GM13976 (cell line): ENCODE measurements at regions of chr3 and their contacts with region 1.

Region 1: GRCh38 chr3:102229062-102229655 is 205.7 kb upstream of the ZPLD1 start:
- DNase-seq: no peak
- CTCF ChIP-seq: peak; percentile 84

Region 2: DNA sequence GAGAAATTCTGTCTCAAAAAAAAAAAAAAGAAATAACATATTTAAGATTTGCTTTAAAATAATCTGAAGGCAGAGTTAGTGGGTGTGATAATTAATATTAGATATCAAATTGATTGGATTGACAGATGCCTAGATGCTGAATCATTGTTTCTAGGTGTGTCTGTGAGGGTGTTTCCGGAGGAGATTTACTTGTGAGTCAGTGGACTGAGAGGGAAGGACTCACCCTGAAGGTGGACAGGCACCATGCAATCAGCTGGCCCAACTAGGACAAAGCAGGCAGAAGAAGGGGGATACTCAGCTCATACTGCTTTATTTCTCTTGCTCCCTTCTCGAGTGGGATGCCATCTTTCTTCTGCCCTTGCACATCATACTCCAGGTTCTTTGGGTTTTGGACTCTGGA is 526.0 kb before region 1 on chr3:
- in situ Hi-C with region 1: loop called (anchors 10 kb)
- DNase-seq: no peak
- CTCF ChIP-seq: no peak

Region 3: GRCh38 chr3:102006812-102007485 is 222.2 kb before region 1 on chr3:
- in situ Hi-C with region 1: no loop called
- DNase-seq: no peak
- CTCF ChIP-seq: no peak

Region 4: DNA sequence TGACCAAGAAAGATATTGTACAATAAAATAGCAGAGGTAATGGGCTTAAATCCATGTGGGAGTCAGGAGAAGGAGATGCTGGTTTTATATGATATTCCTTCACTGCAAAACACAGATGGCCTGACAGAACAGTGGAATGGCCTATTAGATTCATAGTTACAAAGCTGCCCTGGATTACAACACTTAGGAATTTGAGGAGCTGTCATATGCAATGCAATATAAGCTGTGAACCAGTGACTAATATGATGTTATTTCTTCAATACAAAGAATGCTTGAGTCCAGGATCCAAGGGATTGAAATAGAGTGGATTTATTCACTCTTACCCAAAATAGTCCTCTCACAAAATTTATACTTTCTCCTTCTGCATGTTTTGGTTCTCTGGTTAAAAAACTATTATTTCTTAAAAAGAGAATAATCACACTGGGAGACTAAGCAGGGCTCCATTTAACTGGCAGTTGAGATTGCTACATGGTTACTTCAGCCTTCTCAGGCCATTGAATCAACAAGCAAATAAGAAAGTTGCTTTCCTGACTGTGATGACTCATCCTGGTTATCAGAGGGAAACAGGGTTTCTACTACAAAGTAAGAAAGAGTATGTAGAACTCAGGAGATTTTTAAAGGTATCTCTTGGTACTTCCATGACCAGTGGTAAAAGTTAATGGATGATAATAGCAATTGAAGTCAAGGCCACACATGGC is 125.8 kb after region 1 on chr3:
- in situ Hi-C with region 1: no loop called
- DNase-seq: no peak
- CTCF ChIP-seq: no peak

Region 5: GRCh38 chr3:102521246-102521645 is 292.1 kb after region 1 on chr3:
- in situ Hi-C with region 1: no loop called
- DNase-seq: no peak
- CTCF ChIP-seq: no peak

Region 6: DNA sequence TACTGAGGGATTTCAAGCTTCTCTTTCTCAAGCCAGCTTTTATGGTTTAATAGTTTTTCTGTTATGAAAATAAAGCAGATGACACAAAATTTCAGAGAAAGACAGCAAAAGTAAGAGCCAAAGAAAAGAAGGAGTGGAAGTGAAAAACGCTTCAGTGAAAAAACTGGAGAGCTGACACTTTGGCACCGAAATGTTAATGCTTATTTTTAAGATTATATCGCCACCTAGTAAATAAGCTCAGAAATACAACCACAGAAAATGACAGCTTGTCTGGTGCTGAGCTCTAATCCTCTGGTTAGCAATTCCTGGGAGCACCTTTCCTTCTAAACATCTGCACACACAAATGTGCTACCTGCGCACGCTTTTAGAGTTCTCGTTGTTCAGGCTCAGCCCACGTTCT is 307.3 kb after region 1 on chr3:
- in situ Hi-C with region 1: loop called (anchors 5 kb)
- DNase-seq: peak; percentile 27
- CTCF ChIP-seq: peak; percentile 21